ENCODE measurements at regions of chr21 and their contacts with region 1.

Region 1: DNA sequence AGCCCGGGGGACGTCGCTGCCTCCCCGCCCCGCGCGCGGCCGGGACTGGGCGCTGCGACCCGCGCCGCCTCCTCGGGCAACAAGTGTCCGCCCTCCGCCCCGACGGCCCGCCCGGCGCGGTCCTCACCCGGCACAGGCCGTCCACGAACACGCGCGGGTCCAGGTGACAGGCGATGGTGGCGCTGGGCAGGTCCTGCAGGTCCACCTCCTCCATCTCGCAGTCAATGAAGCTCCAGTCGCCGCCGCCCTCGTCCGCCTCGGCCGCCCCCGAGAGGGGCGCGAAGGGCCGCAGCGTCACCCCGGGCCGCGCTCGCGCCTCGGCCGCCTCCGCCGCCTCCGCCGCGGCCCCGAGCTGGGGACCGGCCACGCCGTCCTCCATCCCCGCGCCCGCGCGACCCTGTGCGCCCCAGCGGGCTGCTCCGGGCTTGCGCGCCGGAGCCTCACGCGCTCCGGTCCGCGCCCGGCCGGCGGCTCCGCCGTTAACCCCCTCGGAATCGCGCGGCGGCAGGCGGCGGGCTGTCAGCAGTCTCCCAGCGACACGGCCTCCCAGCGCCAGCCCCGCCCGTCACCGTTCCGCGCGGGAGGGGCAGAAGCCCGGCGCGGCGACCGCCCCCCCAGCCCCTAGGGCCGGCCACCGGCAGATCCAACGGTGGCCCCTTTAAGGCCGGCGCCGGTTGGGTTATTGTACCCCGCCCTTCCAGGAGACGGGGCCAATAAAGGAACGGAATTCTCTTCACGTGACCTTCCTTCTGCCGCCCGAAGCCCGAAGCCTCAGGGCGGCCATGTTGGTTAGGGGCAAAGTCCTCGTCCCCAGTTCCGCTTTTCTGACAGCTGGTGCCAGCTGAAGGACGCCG is at the start of gene RCAN1:
- DNase-seq: peak; percentile 70 to 87 (median 85)
- ATAC-seq: peak; percentile 99
- H3K4me3 ChIP-seq: peak within 1 kb of the TSS; percentile 67
- H3K4me3 Mint-ChIP-seq: peak within 1 kb of the TSS; percentile 83 to 96 (median 93)
- H3K27ac ChIP-seq: peak within 1 kb of the TSS; percentile 57
- H3K27ac Mint-ChIP-seq: peak within 1 kb of the TSS; percentile 82 to 95 (median 83)
- H3K4me1 ChIP-seq: peaks cover 4 to 12% of the 10 kb centered on the region in 2 donors
- H3K4me1 Mint-ChIP-seq: peaks cover 15 to 25% (median 20%) of the 10 kb centered on the region in 7 donors
- H3K27me3 ChIP-seq: no peaks in the 10 kb centered on the region
- H3K27me3 Mint-ChIP-seq: peaks cover 0 to 32% (median 0%) of the 10 kb centered on the region in 5 donors
- total RNA-seq, gene RCAN1: 3.0 to 8.1 (median 4.9) TPM

Region 2: DNA sequence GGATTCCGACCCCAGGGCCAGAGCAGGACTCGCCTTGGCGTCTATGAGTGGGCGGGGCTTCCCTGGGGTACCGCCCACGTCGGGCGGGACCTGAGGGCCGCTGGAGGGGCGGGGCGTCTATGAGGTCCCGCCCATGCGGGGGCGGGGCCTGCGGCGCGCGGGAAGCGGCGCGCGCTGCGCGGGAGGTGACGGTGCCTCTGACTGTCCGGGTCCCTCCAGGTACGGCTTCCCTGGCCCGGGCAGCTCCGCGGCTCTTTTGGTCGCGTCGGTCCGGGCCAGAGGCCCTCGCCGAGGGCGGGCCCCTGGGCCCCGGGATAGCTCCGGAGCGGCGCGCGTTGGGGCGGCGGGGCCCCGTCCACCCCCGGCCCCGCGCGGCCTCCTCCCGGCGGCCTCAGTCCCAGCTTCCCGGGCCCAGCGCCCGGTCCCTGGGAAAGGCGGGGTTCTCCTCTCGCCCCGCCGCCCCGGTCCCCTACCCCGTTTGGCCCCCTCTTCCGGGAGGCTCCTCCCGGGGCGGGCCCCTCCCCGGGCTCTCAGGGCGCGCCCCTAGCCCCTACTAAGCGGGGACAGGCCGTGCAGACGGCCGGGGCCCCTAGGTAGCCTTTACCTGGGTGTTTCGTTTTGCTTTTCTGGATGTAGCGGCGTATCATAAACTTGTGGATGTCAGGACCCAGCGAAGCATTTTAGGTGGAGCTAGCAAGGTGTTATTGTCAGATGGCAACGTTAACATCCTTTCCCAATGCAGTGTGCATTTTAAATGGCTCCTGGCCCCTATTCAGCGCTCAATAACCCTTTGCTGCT is 1770.6 kb after region 1 on chr21 and contains the start of gene CHAF1B:
- CTCF ChIA-PET with region 1: no interaction called
- POLR2A ChIA-PET with region 1: no interaction called
- intact Hi-C with region 1: loop called in 1 of 2 experiments (anchors 5 kb)
- DNase-seq: peak; percentile 63 to 94 (median 82)
- ATAC-seq: peak; percentile 99
- H3K4me3 ChIP-seq: peak within 1 kb of the TSS; percentile 77
- H3K4me3 Mint-ChIP-seq: peak within 1 kb of the TSS; percentile 70 to 89 (median 85)
- H3K27ac ChIP-seq: peak within 1 kb of the TSS; percentile 68
- H3K27ac Mint-ChIP-seq: peak within 1 kb of the TSS in 8 of 9 donors; percentile 7 to 83 (median 56)
- H3K4me1 ChIP-seq: peaks cover 0 to 4% of the 10 kb centered on the region in 2 donors
- H3K4me1 Mint-ChIP-seq: peaks cover 4 to 30% (median 6%) of the 10 kb centered on the region in 7 donors
- H3K27me3 ChIP-seq: no peaks in the 10 kb centered on the region
- H3K27me3 Mint-ChIP-seq: no peaks in the 10 kb centered on the region
- total RNA-seq, gene CHAF1B: 1.5 to 21.4 (median 4.0) TPM